Heart right ventricle (tissue), 16 donors: ENCODE measurements at regions of chr19 and their contacts with region 1.

Region 1: DNA sequence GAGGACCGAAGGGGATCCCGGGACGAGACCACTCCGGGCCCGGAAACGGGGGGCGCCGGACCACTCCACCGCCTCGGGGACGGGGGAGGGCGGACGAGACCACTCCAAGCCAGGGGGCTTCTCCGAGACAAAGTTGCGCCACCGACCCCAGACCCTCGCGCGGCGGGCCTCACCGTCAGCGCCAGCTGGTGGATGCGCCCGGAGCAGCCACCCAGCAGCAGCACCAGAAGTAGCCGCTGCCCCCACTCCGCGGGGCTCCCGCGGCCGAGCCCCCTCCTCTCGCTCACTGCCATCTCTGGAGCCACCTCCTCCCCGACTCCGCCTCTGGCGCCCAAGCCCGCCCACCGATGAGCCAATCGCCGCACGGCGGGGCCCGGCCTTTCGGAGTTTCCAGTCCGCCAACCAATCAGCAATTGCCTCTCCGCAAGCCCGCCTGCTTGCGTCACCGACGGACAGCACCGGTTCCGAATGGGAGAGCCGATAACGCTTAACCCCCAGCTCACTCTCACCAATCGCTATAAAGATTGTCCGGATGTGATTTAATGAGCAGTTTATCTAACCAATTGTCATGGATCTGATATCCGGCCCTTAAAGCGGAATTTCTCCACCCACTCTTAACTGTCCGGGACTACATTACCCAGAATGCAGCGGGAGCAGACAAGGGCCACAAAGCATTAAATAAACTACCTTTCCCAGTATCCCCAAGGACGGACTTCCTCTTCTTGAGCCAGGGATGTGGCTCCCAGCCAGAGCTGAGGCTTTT is at the start of gene GPR108:
- DNase-seq: peak; percentile 99 to 100
- ATAC-seq: peak; percentile 79 to 91 (median 86)
- H3K4me3 ChIP-seq: peak within 1 kb of the TSS; percentile 59 to 99 (median 86)
- H3K27ac ChIP-seq: peak within 1 kb of the TSS; percentile 94 to 100 (median 98)
- H3K4me1 ChIP-seq: peaks cover 12 to 59% (median 44%) of the 10 kb centered on the region in 9 donors
- H3K27me3 ChIP-seq: peaks cover 0 to 10% (median 0%) of the 10 kb centered on the region in 7 donors
- CTCF ChIP-seq: no peak
- total RNA-seq, gene GPR108: 20.4 to 33.6 (median 21.5) TPM

Region 2: DNA sequence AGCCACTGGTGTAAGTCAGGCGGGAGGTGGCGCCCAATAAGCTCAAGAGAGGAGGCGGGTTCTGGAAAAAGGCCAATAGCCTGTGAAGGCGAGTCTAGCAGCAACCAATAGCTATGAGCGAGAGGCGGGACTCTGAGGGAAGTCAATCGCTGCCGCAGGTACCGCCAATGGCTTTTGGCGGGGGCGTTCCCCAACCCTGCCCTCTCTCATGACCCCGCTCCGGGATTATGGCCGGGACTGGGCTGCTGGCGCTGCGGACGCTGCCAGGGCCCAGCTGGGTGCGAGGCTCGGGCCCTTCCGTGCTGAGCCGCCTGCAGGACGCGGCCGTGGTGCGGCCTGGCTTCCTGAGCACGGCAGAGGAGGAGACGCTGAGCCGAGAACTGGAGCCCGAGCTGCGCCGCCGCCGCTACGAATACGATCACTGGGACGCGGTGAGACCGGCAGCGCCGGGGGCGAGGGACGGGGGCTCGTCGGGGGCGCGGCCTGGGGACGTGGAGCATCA is 364.8 kb before region 1 on chr19 and contains the start of gene ALKBH7:
- intact Hi-C with region 1: loop called in 1 of 10 experiments (anchors 10 kb)
- DNase-seq: peak; percentile 95 to 100
- ATAC-seq: peak; percentile 86 to 94 (median 91)
- H3K4me3 ChIP-seq: peak within 1 kb of the TSS; percentile 54 to 100 (median 66)
- H3K27ac ChIP-seq: peak within 1 kb of the TSS; percentile 91 to 100 (median 96)
- H3K4me1 ChIP-seq: peaks cover 0 to 26% (median 8%) of the 10 kb centered on the region in 9 donors
- H3K27me3 ChIP-seq: no peaks in the 10 kb centered on the region
- CTCF ChIP-seq: peak in 1 of 9 donors; percentile 1
- total RNA-seq, gene ALKBH7: 134 to 221 (median 171) TPM

Region 3: DNA sequence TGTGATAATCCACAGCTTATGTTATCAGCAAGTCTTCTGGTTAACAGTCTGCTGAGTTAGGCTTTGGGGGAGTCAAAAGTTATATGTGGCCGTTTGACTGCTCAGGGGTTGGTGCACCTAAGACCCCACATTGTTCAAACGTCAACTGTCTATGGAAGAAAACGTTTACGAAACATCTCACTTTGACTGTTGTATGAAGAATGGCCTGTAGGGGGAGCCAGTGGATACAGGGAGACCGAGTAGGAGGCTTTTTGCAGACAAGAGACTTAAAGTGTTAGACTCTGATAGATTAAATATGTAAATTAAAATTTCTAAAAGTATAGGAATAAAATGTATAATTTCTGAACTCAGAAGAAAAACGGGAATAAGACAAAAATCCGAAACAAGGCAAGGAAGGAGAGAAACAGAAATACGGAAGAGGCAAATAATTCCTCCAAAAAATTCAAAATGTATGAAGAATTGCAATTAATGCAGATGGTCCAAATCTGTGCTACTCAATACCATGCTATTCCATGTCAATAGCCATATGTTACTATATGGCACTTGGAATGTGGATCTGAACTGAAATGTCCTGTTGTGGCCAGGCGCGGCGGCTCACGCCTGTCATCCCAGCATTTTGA is 105.4 kb before region 1 on chr19:
- intact Hi-C with region 1: loop called in 1 of 10 experiments (anchors 10 kb)
- DNase-seq: peak in 1 of 2 donors; percentile 86
- ATAC-seq: peak in 7 of 8 donors; percentile 37 to 71 (median 65)
- H3K4me3 ChIP-seq: no peak overlapping the region
- H3K27ac ChIP-seq: no peak overlapping the region
- H3K4me1 ChIP-seq: peaks cover 0 to 5% (median 0%) of the 10 kb centered on the region in 9 donors
- H3K27me3 ChIP-seq: peaks cover 0 to 51% (median 11%) of the 10 kb centered on the region in 7 donors
- CTCF ChIP-seq: peak; percentile 81 to 93 (median 87)

Region 4: DNA sequence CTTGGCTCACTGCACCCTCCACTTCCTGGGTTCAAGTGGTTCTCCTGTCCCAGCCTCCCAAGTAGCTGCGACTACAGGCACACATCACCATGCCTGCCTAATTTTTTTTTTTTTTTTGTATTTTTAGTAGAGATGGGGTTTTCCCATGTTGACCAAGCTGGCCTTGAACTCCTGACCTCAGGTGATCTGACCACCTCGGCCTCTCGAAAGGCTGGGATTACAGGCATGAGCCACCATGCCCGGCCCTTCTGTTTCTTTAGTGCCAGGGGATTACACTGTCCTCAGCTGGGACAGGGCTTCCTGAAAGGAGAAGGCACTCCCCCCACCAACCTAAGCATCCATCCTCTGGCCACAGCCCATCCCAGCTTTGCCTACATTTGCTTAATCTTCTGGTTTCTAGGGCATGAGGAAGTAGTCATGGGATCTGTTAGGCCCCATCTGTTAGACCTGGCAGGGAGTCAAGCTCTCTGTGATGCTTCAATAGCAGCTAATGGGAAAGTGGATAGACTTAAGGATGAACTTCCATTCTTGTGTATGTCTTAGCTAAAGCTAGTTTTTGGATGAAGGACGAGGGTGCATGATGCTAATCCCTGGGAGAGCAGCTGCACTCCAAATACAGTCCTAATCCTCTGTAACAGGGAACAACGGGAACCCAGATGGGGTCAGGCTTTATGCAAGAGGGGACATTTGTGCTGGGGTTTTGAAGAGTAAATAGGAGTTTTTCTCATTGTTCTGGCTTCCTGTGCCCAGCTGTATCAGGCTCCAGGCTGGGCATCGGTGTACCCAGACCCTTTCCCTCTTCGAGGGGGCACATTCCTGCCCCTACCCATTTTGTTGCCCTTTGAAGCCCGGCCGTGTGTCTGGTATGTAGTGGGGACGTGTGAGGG is 37.6 kb after region 1 on chr19:
- intact Hi-C with region 1: no loop called
- DNase-seq: no peak
- ATAC-seq: peak in 1 of 8 donors; percentile 23
- H3K4me3 ChIP-seq: peak overlapping the region in 1 of 10 donors; percentile 12
- H3K27ac ChIP-seq: peak overlapping the region in 1 of 10 donors; percentile 47
- H3K4me1 ChIP-seq: peaks cover 0 to 23% (median 0%) of the 10 kb centered on the region in 9 donors
- H3K27me3 ChIP-seq: peaks cover 0 to 14% (median 0%) of the 10 kb centered on the region in 7 donors
- CTCF ChIP-seq: no peak

Region 5: GRCh38 chr19:6862673-6863078 is 125.2 kb after region 1 on chr19:
- intact Hi-C with region 1: loop called in 7 of 10 experiments (anchors 2 to 5 kb)
- DNase-seq: peak; percentile 75 to 78
- ATAC-seq: peak; percentile 81 to 97 (median 92)
- H3K4me3 ChIP-seq: peak overlapping the region in 8 of 10 donors; percentile 17 to 47 (median 35)
- H3K27ac ChIP-seq: peak overlapping the region in 1 of 10 donors; percentile 55
- H3K4me1 ChIP-seq: peaks cover 0 to 19% (median 0%) of the 10 kb centered on the region in 9 donors
- H3K27me3 ChIP-seq: peaks cover 0 to 13% (median 11%) of the 10 kb centered on the region in 7 donors
- CTCF ChIP-seq: peak; percentile 69 to 88 (median 83)

Region 6: DNA sequence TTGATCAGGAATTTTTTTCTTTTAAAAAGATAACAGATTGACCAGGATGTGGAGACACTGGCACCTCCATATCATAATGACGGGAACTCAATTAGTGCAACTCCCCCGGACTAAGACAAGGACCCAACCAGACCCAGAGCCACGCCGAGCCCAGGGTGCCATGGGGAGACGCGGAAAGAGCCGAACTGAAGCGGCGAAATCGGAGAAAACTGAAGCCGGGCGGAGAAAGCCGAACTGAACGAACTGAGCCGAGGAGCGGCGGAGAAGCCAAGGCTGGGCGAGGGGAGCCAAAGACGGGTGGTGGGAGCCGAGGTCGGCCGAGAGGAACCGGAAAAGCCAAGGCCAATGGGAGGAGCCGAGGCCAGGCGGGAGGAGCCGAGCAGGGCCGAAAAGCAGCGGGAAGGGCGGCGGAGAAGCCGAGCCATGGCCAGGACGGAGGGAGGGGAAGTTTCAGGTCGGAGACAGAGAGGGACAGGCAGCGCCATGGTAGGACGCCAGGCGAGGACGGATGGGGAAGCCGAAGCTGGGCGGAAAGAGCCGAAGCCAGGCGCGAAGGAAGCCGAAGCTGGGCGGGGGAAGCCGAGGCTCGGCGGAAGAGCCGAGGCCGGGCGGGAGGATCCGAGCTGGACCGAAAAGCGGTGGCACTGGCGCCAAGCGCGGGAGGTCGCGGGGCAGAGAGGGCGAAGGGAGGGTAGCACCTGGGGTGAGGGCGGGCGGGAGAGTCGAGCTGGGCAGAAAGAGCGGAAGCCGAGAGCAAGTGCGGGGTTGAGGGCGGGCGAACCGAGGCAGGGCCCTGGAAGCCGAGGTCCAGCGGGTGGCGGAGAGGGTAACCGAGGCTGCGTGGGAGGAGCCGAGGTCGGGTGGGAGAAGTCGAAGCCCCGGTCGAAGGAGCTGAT is 361.5 kb after region 1 on chr19:
- intact Hi-C with region 1: loop called in 1 of 10 experiments (anchors 5 kb)
- DNase-seq: peak; percentile 93 to 95
- ATAC-seq: peak; percentile 94 to 98 (median 96)
- H3K4me3 ChIP-seq: peak overlapping the region; percentile 46 to 89 (median 64)
- H3K27ac ChIP-seq: peak overlapping the region; percentile 83 to 99 (median 94)
- H3K4me1 ChIP-seq: peaks cover 0 to 18% (median 7%) of the 10 kb centered on the region in 9 donors
- H3K27me3 ChIP-seq: no peaks in the 10 kb centered on the region
- CTCF ChIP-seq: no peak